ENCODE measurements at regions of chrX and their contacts with region 1.

Region 1: GRCh38 chrX:154526901-154527675 is 11.1 kb upstream of the FAM3A start:
- DNase-seq: peak in 1 of 2 experiments; percentile 74
- H3K4me3 ChIP-seq: peak overlapping the region in 3 of 4 experiments; percentile 13 to 51 (median 18); a peak in 4 of 8 replicates
- H3K27ac ChIP-seq: no peak overlapping the region
- H3K4me1 ChIP-seq: 0 out of 7 replicates have a peak, but pooled peaks cover 0 to 3% (median 0%) of the 10 kb centered on the region in 4 experiments
- H3K27me3 ChIP-seq: peaks cover 0 to 11% (median 2%) of the 10 kb centered on the region in 4 experiments; a peak in 4 of 7 replicates
- CTCF ChIP-seq: peak in 2 of 3 experiments; percentile 40 to 50; a peak in 3 of 4 replicates
- EP300 ChIP-seq: no peak
- POLR2A ChIP-seq: peak in 1 of 2 experiments; percentile 23; a peak in 1 of 3 replicates
- RAD21 ChIP-seq: peak; percentile 10 to 34; a peak in 1 of 4 replicates

Region 2: DNA sequence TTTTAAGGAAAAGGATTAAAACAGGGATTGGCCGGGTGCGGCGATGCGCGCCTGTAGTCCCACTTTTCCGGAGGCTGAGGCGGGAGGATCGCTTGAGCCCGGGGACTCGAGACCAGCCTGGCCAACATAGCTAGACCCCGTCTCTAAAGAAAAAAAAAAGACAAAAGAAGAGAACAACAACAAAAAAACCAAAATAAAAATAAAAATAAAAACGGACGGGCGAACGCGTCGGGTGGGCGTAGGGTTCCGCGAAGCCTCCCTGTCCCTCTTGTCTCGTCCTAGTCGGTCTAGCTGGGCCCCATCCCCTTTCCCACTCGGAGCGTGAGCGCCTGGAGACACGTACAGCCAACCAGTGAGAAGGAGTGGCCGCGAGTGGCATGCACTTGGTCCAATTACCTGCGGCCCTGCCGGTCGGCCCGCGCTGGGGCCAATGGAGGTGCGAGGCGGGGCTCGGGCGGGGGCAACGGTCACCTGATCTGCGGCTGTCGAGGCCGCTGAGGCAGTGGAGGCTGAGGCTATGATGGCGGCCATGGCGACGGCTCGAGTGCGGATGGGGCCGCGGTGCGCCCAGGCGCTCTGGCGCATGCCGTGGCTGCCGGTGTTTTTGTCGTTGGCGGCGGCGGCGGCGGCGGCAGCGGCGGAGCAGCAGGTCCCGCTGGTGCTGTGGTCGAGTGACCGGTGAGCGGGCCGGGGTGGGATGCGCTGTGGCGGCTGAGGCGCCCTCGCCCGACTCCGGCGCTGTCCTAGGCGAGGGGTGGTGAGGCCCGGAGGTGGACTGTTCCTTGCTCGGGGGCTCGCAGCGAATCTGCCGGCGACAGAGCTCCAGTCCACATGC is 98.7 kb before region 1 on chrX and contains the start of gene ATP6AP1:
- CTCF ChIA-PET with region 1: no interaction called
- POLR2A ChIA-PET with region 1: no interaction called
- DNase-seq: peak in 1 of 2 experiments; percentile 83
- H3K4me3 ChIP-seq: peak within 1 kb of the TSS; percentile 30 to 84 (median 56)
- H3K27ac ChIP-seq: no peak within 1 kb of the TSS
- H3K4me1 ChIP-seq: no peaks in the 10 kb centered on the region
- H3K27me3 ChIP-seq: no peaks in the 10 kb centered on the region
- CTCF ChIP-seq: no peak
- EP300 ChIP-seq: no peak
- POLR2A ChIP-seq: no peak; a peak in 1 of 3 replicates
- RAD21 ChIP-seq: no peak
- total RNA-seq, gene ATP6AP1: 44.6 and 46.7 TPM in 2 replicates

Region 3: GRCh38 chrX:154515878-154516655 is 11.0 kb before region 1 on chrX and contains the start of gene FAM3A:
- CTCF ChIA-PET with region 1: interaction called, 3 read pairs
- POLR2A ChIA-PET with region 1: interaction called, 10 read pairs
- DNase-seq: peak in 1 of 2 experiments; percentile 87
- H3K4me3 ChIP-seq: peak within 1 kb of the TSS; percentile 41 to 81 (median 49)
- H3K27ac ChIP-seq: peak within 1 kb of the TSS; percentile 87
- H3K4me1 ChIP-seq: peaks cover 1 to 10% (median 7%) of the 10 kb centered on the region in 4 experiments; a peak in 6 of 7 replicates
- H3K27me3 ChIP-seq: no peaks in the 10 kb centered on the region
- CTCF ChIP-seq: no peak
- EP300 ChIP-seq: no peak
- POLR2A ChIP-seq: peak in 1 of 2 experiments; percentile 53; a peak in 1 of 3 replicates
- RAD21 ChIP-seq: no peak
- total RNA-seq, gene FAM3A: 16.2 and 21.7 TPM in 2 replicates

Region 4: DNA sequence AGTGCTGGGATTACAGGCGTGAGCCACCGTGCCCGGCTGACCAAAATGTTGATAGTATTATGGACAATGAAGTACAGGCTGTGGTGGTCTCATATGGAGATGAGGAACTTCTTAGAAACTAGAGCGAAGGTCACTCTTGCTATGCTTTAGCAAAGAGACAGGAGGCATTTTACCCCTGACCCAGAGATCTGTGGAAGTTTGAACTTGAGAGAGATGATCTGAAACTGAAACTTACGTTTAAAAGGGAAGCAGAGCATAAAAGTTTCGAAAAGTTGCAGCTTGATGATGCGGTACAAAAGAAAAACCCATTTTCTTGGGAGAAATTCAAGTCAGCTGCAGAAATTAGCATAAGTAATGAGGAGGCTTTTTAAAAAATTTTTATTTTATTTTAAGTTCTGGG is 134.8 kb after region 1 on chrX:
- CTCF ChIA-PET with region 1: no interaction called
- POLR2A ChIA-PET with region 1: no interaction called
- DNase-seq: no peak
- H3K4me3 ChIP-seq: no peak overlapping the region
- H3K27ac ChIP-seq: no peak overlapping the region
- H3K4me1 ChIP-seq: no peaks in the 10 kb centered on the region
- H3K27me3 ChIP-seq: no peaks in the 10 kb centered on the region
- CTCF ChIP-seq: no peak
- EP300 ChIP-seq: no peak
- POLR2A ChIP-seq: no peak
- RAD21 ChIP-seq: no peak

Region 5: DNA sequence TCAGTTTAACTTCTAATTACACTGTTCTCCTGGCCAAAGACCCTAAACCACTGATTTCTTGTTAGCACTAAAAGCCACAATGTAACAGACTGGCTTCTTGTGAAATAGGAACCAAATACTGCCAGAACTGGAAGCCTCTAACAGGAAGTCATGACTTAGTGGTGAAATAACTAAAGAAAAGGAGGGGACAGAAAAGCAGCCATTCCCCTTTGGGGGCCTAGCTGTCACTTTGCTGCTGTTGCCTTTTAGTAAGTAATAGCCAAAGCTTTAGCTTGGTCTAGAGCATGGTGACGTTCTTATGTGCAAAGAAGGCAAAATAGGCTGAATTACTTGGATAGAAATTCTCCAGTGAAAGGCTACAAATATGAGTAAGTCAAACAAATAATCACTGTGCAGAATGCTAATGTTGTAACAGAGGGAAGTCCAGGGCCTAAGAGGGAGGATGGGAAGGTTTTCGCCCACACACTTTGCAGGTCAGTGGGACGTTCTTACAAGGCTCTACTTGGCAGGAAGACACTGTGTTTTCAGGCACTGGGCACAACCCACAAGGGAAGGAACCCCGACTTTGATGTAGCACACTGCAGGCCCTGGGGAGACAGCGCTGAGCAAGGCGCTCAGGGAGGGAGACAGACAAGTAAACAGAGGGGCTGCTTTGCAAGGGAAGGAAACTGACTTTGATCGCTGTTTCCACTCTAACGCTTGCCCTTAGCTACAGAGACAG is 207.1 kb after region 1 on chrX:
- CTCF ChIA-PET with region 1: no interaction called
- POLR2A ChIA-PET with region 1: no interaction called
- DNase-seq: no peak
- H3K4me3 ChIP-seq: no peak overlapping the region
- H3K27ac ChIP-seq: no peak overlapping the region
- H3K4me1 ChIP-seq: no peaks in the 10 kb centered on the region
- H3K27me3 ChIP-seq: no peaks in the 10 kb centered on the region
- CTCF ChIP-seq: no peak
- EP300 ChIP-seq: no peak
- POLR2A ChIP-seq: no peak
- RAD21 ChIP-seq: no peak

Measured in H1 (cell line).